ENCODE measurements at regions of chr3 and their contacts with region 1.

Region 1: DNA sequence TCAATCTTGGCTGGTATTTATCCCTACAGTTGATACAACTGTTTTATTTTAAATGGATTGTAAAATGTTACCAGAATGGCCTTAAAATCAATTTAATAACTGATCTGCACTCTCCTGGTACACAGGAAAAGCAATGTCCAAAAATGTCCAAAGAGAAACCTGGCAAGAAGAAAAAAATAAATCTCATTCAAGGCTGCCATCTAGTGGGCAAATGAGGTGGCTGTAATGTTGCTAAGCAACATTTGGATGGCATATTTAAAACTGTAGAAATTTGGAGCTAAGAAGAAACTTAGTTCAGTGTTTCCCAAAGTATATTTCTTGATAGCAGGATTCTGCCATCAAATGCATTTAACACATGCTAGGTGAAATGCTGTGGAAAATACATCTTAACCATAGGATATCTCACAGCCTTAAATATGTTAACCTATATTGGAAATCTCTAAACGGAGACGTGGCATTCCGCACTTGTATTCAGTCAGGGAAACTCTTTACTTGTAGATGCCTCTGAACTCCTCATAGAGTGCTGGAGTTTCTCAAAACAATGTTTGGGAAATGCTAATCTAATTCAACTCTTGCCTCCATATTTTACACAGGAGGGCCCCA is 216.8 kb downstream of the ERC2 start:
- DNase-seq: peak; percentile 35
- H3K4me3 Mint-ChIP-seq: no peak overlapping the region
- H3K27ac Mint-ChIP-seq: no peak overlapping the region
- H3K4me1 Mint-ChIP-seq: no peaks in the 10 kb centered on the region
- H3K27me3 Mint-ChIP-seq: peaks cover 5% of the 10 kb centered on the region

Region 2: GRCh38 chr3:54427941-54428871 is 1823.2 kb before region 1 on chr3:
- CTCF ChIA-PET with region 1: no interaction called
- intact Hi-C with region 1: loop called (anchors 5 kb)
- DNase-seq: peak; percentile 67
- H3K4me3 Mint-ChIP-seq: no peak overlapping the region
- H3K27ac Mint-ChIP-seq: no peak overlapping the region
- H3K4me1 Mint-ChIP-seq: no peaks in the 10 kb centered on the region
- H3K27me3 Mint-ChIP-seq: peaks cover 3% of the 10 kb centered on the region

Region 3: GRCh38 chr3:56291953-56292352 is 40.5 kb after region 1 on chr3:
- CTCF ChIA-PET with region 1: no interaction called
- intact Hi-C with region 1: no loop called
- DNase-seq: no peak
- H3K4me3 Mint-ChIP-seq: no peak overlapping the region
- H3K27ac Mint-ChIP-seq: no peak overlapping the region
- H3K4me1 Mint-ChIP-seq: no peaks in the 10 kb centered on the region
- H3K27me3 Mint-ChIP-seq: peaks cover 5% of the 10 kb centered on the region